Activated CD4-positive, alpha-beta memory T cell treated with anti-CD3 and anti-CD28 coated beads for 36 hours (primary cell): ENCODE measurements at regions of chr4 and their contacts with region 1.

Region 1: DNA sequence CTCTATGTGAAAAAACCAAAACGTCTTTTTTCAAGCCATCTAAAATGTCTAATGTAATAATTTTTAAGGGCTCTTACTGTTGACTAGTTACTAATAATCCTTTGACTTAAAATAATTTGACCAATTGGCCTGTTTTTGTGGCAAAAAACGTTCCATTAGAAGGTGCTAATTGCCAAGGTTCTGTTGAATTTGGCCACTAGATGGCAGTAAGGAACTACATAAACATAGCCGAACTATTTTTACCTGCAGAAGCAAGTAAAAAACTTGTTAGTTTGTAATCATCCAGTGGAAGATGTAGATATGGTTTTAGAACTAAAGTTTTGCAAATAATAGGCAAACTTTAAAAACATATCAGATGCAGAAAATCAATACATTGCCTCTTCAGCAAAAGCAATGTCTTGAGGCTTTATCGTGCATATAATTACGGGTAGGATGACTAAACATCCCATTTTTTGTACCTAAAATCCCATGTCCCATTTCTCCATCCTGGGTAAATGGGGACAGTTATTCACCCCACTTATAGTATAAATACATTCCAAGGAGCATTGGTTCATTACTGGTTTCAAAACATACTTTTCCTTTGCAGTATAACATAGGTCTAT is 57.6 kb downstream of the PROM1 start:
- DNase-seq: no peak
- H3K4me3 Mint-ChIP-seq: no peak overlapping the region
- H3K27ac Mint-ChIP-seq: no peak overlapping the region
- H3K4me1 Mint-ChIP-seq: peaks cover 10% of the 10 kb centered on the region
- H3K27me3 Mint-ChIP-seq: peaks cover 31% of the 10 kb centered on the region

Region 2: GRCh38 chr4:16008671-16009070 is 17.6 kb before region 1 on chr4:
- CTCF ChIA-PET with region 1: no interaction called
- POLR2A ChIA-PET with region 1: no interaction called
- intact Hi-C with region 1: no loop called
- DNase-seq: no peak
- H3K4me3 Mint-ChIP-seq: no peak overlapping the region
- H3K27ac Mint-ChIP-seq: no peak overlapping the region
- H3K4me1 Mint-ChIP-seq: no peaks in the 10 kb centered on the region
- H3K27me3 Mint-ChIP-seq: peaks cover 15% of the 10 kb centered on the region

Region 3: GRCh38 chr4:16043642-16044498 is 17.6 kb after region 1 on chr4:
- CTCF ChIA-PET with region 1: no interaction called
- POLR2A ChIA-PET with region 1: no interaction called
- intact Hi-C with region 1: no loop called
- DNase-seq: no peak
- H3K4me3 Mint-ChIP-seq: no peak overlapping the region
- H3K27ac Mint-ChIP-seq: no peak overlapping the region
- H3K4me1 Mint-ChIP-seq: no peaks in the 10 kb centered on the region
- H3K27me3 Mint-ChIP-seq: no peaks in the 10 kb centered on the region

Region 4: DNA sequence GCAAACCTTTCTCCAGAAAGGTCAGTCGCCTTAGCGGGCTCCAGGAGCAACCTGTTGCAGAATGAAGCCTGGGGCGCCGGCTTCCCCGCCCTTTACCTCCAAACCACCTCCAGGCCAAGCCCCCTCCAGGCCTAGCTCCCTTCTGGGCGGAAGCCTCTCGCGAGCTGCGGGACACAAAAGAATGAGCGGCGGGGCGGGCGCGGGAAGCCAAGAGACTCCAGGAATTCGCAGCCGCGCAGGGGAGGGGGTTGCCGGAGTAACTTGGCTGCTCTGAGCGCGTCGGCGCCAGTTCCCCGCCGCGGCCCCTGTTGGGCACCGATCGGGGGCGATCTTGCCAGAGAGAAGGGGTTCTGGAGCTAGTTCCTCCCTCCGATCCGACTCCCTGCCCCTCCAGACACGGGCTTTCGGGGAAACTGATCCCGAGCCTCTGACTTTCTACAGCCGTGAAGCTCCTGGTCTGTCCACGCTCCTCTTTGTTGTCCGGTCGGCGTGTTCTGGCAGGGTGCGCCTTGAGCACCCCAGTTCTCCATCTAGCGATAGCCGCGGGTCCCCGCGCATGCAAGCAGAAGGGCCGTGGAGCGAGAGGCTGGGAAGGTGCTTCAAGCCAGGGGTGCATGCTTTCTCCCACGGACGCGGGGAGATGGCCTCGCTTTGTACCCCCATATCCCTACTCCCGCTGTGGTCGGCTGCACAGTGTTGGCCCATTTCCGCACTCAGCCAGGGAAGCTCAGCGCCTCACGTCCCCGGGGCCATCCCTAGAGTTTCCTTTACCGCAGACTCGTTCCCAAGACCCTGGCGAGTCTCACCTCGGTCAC is 56.4 kb after region 1 on chr4:
- CTCF ChIA-PET with region 1: no interaction called
- POLR2A ChIA-PET with region 1: no interaction called
- intact Hi-C with region 1: loop called (anchors 2 kb)
- DNase-seq: no peak
- H3K4me3 Mint-ChIP-seq: peak overlapping the region; percentile 56
- H3K27ac Mint-ChIP-seq: no peak overlapping the region
- H3K4me1 Mint-ChIP-seq: peaks cover 21% of the 10 kb centered on the region
- H3K27me3 Mint-ChIP-seq: peaks cover 68% of the 10 kb centered on the region

Region 5: GRCh38 chr4:16196478-16197393 is 170.5 kb after region 1 on chr4:
- CTCF ChIA-PET with region 1: interaction called, 7 read pairs
- POLR2A ChIA-PET with region 1: no interaction called
- intact Hi-C with region 1: loop called (anchors 1 kb)
- DNase-seq: no peak
- H3K4me3 Mint-ChIP-seq: no peak overlapping the region
- H3K27ac Mint-ChIP-seq: no peak overlapping the region
- H3K4me1 Mint-ChIP-seq: peaks cover 16% of the 10 kb centered on the region
- H3K27me3 Mint-ChIP-seq: no peaks in the 10 kb centered on the region

Region 6: GRCh38 chr4:16205298-16206164 is 179.3 kb after region 1 on chr4:
- CTCF ChIA-PET with region 1: interaction called, 15 read pairs
- POLR2A ChIA-PET with region 1: no interaction called
- intact Hi-C with region 1: no loop called
- DNase-seq: no peak
- H3K4me3 Mint-ChIP-seq: no peak overlapping the region
- H3K27ac Mint-ChIP-seq: no peak overlapping the region
- H3K4me1 Mint-ChIP-seq: peaks cover 37% of the 10 kb centered on the region
- H3K27me3 Mint-ChIP-seq: no peaks in the 10 kb centered on the region

Region 7: DNA sequence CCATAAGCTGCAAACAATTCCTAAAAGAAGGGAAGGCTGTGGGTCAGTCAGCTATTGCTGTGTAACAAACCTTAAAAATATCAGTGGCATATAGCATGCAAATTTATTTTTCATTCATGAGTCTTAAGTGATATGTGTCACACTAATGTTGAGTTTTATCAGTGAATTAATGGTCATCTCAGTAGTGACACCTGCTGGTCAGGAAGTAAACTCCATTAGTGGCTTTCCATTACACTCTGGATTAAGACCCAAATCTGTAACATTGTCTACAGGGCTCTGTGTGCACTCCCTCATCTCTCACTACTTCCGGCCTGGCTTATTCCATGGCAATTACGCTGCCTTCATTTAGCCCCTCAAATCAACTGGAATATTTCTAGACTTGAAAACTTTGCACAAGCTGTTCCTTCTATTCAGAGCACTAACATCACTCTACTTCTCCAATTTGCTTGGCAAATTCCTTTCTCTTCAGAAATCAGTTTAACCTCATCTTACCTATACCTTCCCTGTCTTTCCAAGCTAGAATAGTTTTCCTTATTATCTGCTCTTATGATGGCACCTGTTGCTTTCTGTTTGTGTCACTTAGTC is 417.3 kb after region 1 on chr4:
- CTCF ChIA-PET with region 1: no interaction called
- POLR2A ChIA-PET with region 1: no interaction called
- intact Hi-C with region 1: loop called (anchors 5 kb)
- DNase-seq: no peak
- H3K4me3 Mint-ChIP-seq: no peak overlapping the region
- H3K27ac Mint-ChIP-seq: no peak overlapping the region
- H3K4me1 Mint-ChIP-seq: no peaks in the 10 kb centered on the region
- H3K27me3 Mint-ChIP-seq: peaks cover 1% of the 10 kb centered on the region

Region 8: GRCh38 chr4:16916719-16917337 is 890.6 kb after region 1 on chr4:
- CTCF ChIA-PET with region 1: no interaction called
- POLR2A ChIA-PET with region 1: no interaction called
- intact Hi-C with region 1: loop called (anchors 5 kb)
- DNase-seq: peak; percentile 82
- H3K4me3 Mint-ChIP-seq: no peak overlapping the region
- H3K27ac Mint-ChIP-seq: no peak overlapping the region
- H3K4me1 Mint-ChIP-seq: no peaks in the 10 kb centered on the region
- H3K27me3 Mint-ChIP-seq: no peaks in the 10 kb centered on the region